A549 (cell line): ENCODE measurements at regions of chr15 and their contacts with region 1.

Region 1: GRCh38 chr15:89017370-89018066 is 70.7 kb upstream of the ABHD2 start:
- DNase-seq: peak; percentile 82 to 84
- ATAC-seq: peak; percentile 90 to 95
- H3K4me3 ChIP-seq: peak overlapping the region; percentile 37
- H3K27ac ChIP-seq: peak overlapping the region; percentile 68 to 79
- H3K4me1 ChIP-seq: peaks cover 17% of the 10 kb centered on the region
- CTCF ChIP-seq: peak; percentile 97
- EP300 ChIP-seq: no peak
- POLR2A ChIP-seq: no peak
- RAD21 ChIP-seq: peak; percentile 93 to 95

Region 2: GRCh38 chr15:88878720-88879184 is 138.8 kb before region 1 on chr15:
- CTCF ChIA-PET with region 1: interaction called, 10 read pairs
- POLR2A ChIA-PET with region 1: no interaction called
- DNase-seq: peak; percentile 68 to 87
- ATAC-seq: peak; percentile 91 to 95
- H3K4me3 ChIP-seq: no peak overlapping the region
- H3K27ac ChIP-seq: no peak overlapping the region
- H3K4me1 ChIP-seq: no peaks in the 10 kb centered on the region
- CTCF ChIP-seq: peak; percentile 78
- EP300 ChIP-seq: no peak
- POLR2A ChIP-seq: no peak
- RAD21 ChIP-seq: peak; percentile 70 to 82

Region 3: GRCh38 chr15:88897456-88898194 is 119.9 kb before region 1 on chr15:
- CTCF ChIA-PET with region 1: interaction called, 851 read pairs
- POLR2A ChIA-PET with region 1: no interaction called
- DNase-seq: peak; percentile 80 to 88
- ATAC-seq: peak; percentile 66 to 81
- H3K4me3 ChIP-seq: no peak overlapping the region
- H3K27ac ChIP-seq: peak overlapping the region; percentile 35 to 62; a peak in 5 of 6 replicates
- H3K4me1 ChIP-seq: peaks cover 32% of the 10 kb centered on the region
- CTCF ChIP-seq: peak; percentile 47
- EP300 ChIP-seq: no peak
- POLR2A ChIP-seq: no peak
- RAD21 ChIP-seq: peak; percentile 37; a peak in 3 of 5 replicates

Region 4: DNA sequence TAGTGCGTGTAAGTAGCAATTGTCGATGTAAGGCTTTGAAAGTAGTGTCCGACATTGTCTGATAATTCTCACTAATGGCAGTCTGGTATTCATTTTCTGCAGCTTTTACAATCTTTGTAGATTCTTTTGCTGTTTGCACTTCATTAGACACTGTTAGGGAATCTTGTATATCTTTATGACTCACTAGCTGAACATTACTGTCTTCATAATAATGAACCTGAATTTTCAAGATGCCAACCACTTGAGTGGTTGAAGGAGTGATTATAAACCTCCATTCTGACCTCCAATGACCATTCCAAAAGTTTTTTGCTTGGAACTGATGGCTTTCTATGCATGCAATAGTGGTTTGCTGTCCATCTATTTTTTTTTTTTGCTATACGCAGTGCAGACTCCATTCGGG is 27.9 kb before region 1 on chr15:
- CTCF ChIA-PET with region 1: interaction called, 11 read pairs
- POLR2A ChIA-PET with region 1: no interaction called
- DNase-seq: peak in 1 of 2 experiments; percentile 49
- ATAC-seq: peak in 1 of 2 experiments; percentile 55; a peak in 3 of 6 replicates
- H3K4me3 ChIP-seq: peak overlapping the region; percentile 7; the same call in 1 of the 3 replicates
- H3K27ac ChIP-seq: peak overlapping the region; percentile 76 to 87
- H3K4me1 ChIP-seq: peaks cover 66% of the 10 kb centered on the region
- CTCF ChIP-seq: no peak
- EP300 ChIP-seq: peak in 1 of 2 experiments; percentile 61; a peak in 1 of 5 replicates
- POLR2A ChIP-seq: no peak
- RAD21 ChIP-seq: no peak

Region 5: GRCh38 chr15:89034288-89034687 is 16.8 kb after region 1 on chr15:
- CTCF ChIA-PET with region 1: interaction called, 22 read pairs
- POLR2A ChIA-PET with region 1: no interaction called
- DNase-seq: peak; percentile 54 to 62
- ATAC-seq: peak; percentile 56 to 76; a peak in 5 of 6 replicates
- H3K4me3 ChIP-seq: no peak overlapping the region
- H3K27ac ChIP-seq: no peak overlapping the region
- H3K4me1 ChIP-seq: no peaks in the 10 kb centered on the region
- CTCF ChIP-seq: peak; percentile 62
- EP300 ChIP-seq: no peak
- POLR2A ChIP-seq: no peak
- RAD21 ChIP-seq: peak; percentile 63 to 78